Vagina (tissue), 2 donors: ENCODE measurements at regions of chr16 and their contacts with region 1.

Region 1: GRCh38 chr16:3880623-3881498 is at the start of gene CREBBP:
- DNase-seq: no peak
- H3K4me3 ChIP-seq: peak within 1 kb of the TSS; percentile 93 to 98
- H3K27ac ChIP-seq: peak within 1 kb of the TSS; percentile 86
- H3K4me1 ChIP-seq: peaks cover 41% of the 10 kb centered on the region
- H3K27me3 ChIP-seq: no peaks in the 10 kb centered on the region
- CTCF ChIP-seq: no peak
- POLR2A ChIP-seq: peak in 1 of 2 donors; percentile 33
- total RNA-seq, gene CREBBP: 102 TPM

Region 2: DNA sequence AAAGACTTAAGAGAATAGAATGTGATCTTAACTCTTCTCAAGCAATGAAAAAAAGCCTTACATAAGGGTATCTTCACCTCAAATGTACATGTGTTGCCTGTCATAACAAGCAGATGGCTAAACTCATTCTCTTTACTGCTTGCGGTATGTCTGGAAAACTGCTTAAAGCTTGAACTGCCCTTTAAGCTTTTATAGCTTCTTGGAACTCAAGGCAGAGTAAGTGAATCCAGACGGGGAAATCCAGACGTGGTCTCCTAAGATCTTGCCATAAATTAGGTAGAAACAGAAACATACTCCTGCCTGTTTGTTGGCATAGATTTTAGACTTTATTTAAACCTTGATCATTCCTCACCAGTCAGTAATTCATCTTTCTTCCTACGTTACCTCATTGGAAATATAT is 360.4 kb before region 1 on chr16:
- intact Hi-C with region 1: loop called (anchors 10 kb)
- DNase-seq: no peak
- H3K4me3 ChIP-seq: peak overlapping the region in 1 of 2 donors; percentile 0
- H3K27ac ChIP-seq: peak overlapping the region; percentile 12
- H3K4me1 ChIP-seq: no peaks in the 10 kb centered on the region
- H3K27me3 ChIP-seq: no peaks in the 10 kb centered on the region
- CTCF ChIP-seq: no peak
- POLR2A ChIP-seq: no peak

Region 3: GRCh38 chr16:3689731-3690130 is 191.1 kb before region 1 on chr16:
- intact Hi-C with region 1: loop called (anchors 5 kb)
- DNase-seq: no peak
- H3K4me3 ChIP-seq: no peak overlapping the region
- H3K27ac ChIP-seq: peak overlapping the region; percentile 83
- H3K4me1 ChIP-seq: peaks cover 17% of the 10 kb centered on the region
- H3K27me3 ChIP-seq: no peaks in the 10 kb centered on the region
- CTCF ChIP-seq: no peak
- POLR2A ChIP-seq: no peak